Lower lobe of right lung (tissue), 2 donors: ENCODE measurements at regions of chr18 and their contacts with region 1.

Region 1: DNA sequence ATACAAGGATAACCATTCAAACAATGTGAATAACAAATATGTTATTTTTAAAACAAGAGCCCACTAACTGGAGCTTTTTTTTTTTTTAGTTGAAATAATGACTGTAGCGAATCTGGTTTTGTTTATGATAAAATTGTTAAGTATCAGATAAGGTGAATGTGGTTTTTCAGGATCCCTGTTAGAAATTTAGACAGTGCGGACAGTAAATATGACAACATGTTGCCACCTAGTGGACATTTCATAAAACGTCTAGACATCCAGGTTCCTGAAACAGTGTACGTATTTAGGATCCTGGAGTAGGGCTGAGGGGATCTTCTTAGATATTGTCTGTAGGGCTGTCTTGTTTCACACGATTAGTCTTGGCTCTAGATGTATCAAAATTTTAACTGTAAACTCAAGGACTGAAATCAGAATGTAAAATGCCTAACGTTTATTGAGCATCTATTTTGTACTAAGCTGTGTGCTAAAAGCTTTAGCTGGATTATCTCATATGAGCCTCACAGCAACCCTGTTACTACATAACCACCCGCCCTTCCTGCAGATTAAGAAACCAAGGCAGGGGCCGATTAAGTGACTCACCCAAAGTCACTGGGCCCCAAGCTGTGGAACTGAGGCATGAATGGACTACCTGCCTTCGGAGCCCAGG is 23.9 kb upstream of the CCDC68 start:
- DNase-seq: no peak
- ATAC-seq: peak; percentile 74 to 85
- H3K4me3 ChIP-seq: no peak overlapping the region
- H3K27ac ChIP-seq: no peak overlapping the region
- H3K4me1 ChIP-seq: no peaks in the 10 kb centered on the region
- H3K27me3 ChIP-seq: no peaks in the 10 kb centered on the region
- CTCF ChIP-seq: peak; percentile 70

Region 2: GRCh38 chr18:54679318-54680149 is 303.6 kb before region 1 on chr18:
- intact Hi-C with region 1: loop called (anchors 10 kb)
- DNase-seq: no peak
- ATAC-seq: peak; percentile 53 to 88
- H3K4me3 ChIP-seq: no peak overlapping the region
- H3K27ac ChIP-seq: no peak overlapping the region
- H3K4me1 ChIP-seq: no peaks in the 10 kb centered on the region
- H3K27me3 ChIP-seq: no peaks in the 10 kb centered on the region
- CTCF ChIP-seq: peak; percentile 47

Region 3: DNA sequence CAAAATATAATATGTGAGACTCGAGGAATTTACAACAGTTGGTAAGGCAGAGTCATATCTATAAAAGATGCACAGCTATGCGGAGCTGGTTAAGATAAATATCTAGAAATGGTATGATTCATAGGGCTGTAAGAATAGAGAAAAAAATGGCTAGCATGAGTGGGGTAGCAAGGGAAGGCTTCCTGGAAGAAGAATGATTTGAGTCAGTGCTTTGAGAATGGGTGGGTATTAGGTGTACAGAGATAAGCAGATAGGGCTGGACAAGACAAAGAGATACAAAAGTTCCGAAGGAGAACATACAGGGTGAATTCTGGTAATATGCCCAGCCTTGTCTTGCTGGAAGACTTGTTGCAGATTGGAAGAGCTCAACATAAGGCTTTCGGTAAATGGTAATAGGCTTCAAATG is 267.6 kb after region 1 on chr18:
- intact Hi-C with region 1: no loop called
- DNase-seq: no peak
- ATAC-seq: no peak
- H3K4me3 ChIP-seq: no peak overlapping the region
- H3K27ac ChIP-seq: no peak overlapping the region
- H3K4me1 ChIP-seq: peaks cover 26% of the 10 kb centered on the region
- H3K27me3 ChIP-seq: no peaks in the 10 kb centered on the region
- CTCF ChIP-seq: no peak